ENCODE measurements at regions of chr11 and their contacts with region 1.

Region 1: GRCh38 chr11:16117989-16118756 is 238.2 kb downstream of the SOX6 start:
- DNase-seq: no peak
- H3K4me3 ChIP-seq: no peak overlapping the region
- H3K27ac ChIP-seq: no peak overlapping the region
- H3K4me1 ChIP-seq: no peaks in the 10 kb centered on the region
- H3K27me3 ChIP-seq: no peaks in the 10 kb centered on the region
- CTCF ChIP-seq: no peak
- EP300 ChIP-seq: no peak
- POLR2A ChIP-seq: no peak

Region 2: DNA sequence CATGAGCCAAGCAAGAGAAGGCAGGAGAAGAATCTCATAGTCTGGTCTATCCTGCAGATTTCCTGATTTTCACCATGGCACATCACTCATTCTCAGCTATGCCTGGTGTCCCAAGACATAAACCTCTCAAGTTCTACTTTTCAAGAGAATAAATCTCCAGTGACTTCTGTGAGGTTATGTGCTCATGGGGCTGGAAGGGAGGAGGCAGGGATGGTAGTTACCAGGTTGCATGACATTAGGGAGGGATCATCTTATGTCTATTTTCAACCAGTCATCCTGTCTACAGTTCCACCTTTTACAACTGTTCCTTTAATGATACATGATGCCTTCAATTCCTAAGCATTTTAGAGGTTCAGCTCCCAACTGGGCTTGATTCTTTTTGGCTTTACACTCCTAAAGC is 59.5 kb before region 1 on chr11:
- in situ Hi-C with region 1: no loop called
- intact Hi-C with region 1: loop called (anchors 2 kb)
- DNase-seq: no peak
- H3K4me3 ChIP-seq: no peak overlapping the region
- H3K27ac ChIP-seq: no peak overlapping the region
- H3K4me1 ChIP-seq: no peaks in the 10 kb centered on the region
- H3K27me3 ChIP-seq: no peaks in the 10 kb centered on the region
- CTCF ChIP-seq: no peak
- EP300 ChIP-seq: no peak
- POLR2A ChIP-seq: no peak

Measured in transverse colon (tissue), 4 donors.